Calu3 (cell line): ENCODE measurements at regions of chr19 and their contacts with region 1.

Region 1: GRCh38 chr19:46990991-46991676 is 28.5 kb upstream of the NPAS1 start:
- DNase-seq: peak; percentile 85
- H3K4me3 Mint-ChIP-seq: no peak overlapping the region
- H3K27ac Mint-ChIP-seq: no peak overlapping the region
- H3K4me1 Mint-ChIP-seq: no peaks in the 10 kb centered on the region
- H3K27me3 Mint-ChIP-seq: no peaks in the 10 kb centered on the region
- CTCF ChIP-seq: peak; percentile 80

Region 2: GRCh38 chr19:46753420-46754155 is 237.5 kb before region 1 on chr19:
- CTCF ChIA-PET with region 1: interaction called, 3 read pairs
- intact Hi-C with region 1: loop called (anchors 10 kb)
- DNase-seq: peak; percentile 60
- H3K4me3 Mint-ChIP-seq: no peak overlapping the region
- H3K27ac Mint-ChIP-seq: peak overlapping the region; percentile 8
- H3K4me1 Mint-ChIP-seq: no peaks in the 10 kb centered on the region
- H3K27me3 Mint-ChIP-seq: no peaks in the 10 kb centered on the region
- CTCF ChIP-seq: no peak

Region 3: DNA sequence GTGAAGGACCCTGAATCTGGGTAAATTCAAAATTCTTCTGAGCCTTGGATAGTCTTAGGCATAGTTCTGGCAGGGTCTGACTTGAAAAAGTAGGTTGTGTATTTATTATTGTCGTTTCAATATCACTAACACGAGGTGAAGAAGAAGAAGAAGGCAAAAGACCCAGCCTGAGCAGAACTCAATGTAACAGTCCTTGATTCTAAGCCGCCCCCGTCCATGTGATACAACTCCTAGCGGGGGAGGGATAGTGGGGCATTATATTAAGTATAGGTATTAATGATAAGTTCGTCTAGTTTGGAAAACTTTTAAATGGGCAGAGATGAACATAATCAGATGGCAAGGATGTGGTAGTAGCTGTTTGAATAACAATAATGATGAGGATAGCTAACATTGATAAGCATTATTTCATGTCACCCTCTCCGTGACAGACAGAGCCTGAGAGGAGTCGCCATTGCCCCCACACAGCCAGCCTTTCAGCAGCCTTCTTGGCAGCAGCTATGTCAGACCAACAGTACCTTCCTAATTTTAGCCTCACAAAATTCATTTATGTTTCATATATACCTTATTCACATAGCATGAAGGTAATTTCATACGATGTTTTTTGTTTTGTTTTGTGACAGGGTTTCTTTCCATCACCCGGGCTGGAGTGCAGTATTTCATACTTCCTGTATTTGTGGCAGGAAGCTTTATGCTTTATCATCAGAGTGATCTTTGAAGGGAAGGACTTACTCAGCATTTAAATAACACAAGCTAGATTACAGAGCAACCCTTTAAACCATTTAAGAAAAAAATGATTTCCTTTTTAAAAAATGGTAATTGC is 35.9 kb before region 1 on chr19:
- CTCF ChIA-PET with region 1: no interaction called
- intact Hi-C with region 1: no loop called
- DNase-seq: no peak
- H3K4me3 Mint-ChIP-seq: peak overlapping the region; percentile 56
- H3K27ac Mint-ChIP-seq: peak overlapping the region; percentile 65
- H3K4me1 Mint-ChIP-seq: peaks cover 56% of the 10 kb centered on the region
- H3K27me3 Mint-ChIP-seq: no peaks in the 10 kb centered on the region
- CTCF ChIP-seq: no peak